OCI-LY7 (cell line): ENCODE measurements at regions of chr5 and their contacts with region 1.

Region 1: DNA sequence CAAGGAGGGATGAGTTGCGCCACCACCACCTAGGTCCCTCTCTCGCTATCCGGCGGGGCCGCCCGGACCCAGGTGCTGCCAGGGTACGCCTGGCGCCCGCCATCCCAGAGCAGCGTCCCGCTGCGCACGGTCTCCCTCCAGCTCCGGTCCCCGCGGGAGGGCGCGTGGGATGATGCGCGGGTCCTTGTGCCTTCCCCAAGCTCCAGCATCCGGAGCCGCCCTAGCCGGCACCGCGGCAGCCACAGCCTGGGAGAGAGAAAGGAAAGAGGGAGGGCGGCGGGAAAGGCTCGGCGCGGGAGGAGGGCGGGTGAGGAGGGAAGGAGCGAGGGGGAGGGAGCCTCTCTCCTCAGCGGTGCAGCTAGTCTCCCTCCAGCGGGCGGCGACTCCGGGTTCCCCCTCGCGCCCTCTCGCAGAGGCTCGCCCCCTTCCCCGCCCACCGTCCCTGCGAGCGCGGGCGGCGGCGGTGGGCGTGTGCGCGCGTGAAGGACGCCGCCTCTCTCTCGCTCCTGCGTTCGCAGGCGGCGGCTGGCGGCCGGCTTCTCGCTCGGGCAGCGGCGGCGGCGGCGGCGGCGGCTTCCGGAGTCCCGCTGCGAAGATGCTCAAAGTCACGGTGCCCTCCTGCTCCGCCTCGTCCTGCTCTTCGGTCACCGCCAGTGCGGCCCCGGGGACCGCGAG is at the start of gene CAMK4:
- DNase-seq: peak; percentile 82
- H3K4me3 ChIP-seq: peak within 1 kb of the TSS; percentile 75
- H3K27ac ChIP-seq: peak within 1 kb of the TSS; percentile 49
- H3K4me1 ChIP-seq: peaks cover 20% of the 10 kb centered on the region
- CTCF ChIP-seq: peak; percentile 43
- total RNA-seq, gene CAMK4: 36.5 and 40.2 TPM in 2 replicates

Region 2: DNA sequence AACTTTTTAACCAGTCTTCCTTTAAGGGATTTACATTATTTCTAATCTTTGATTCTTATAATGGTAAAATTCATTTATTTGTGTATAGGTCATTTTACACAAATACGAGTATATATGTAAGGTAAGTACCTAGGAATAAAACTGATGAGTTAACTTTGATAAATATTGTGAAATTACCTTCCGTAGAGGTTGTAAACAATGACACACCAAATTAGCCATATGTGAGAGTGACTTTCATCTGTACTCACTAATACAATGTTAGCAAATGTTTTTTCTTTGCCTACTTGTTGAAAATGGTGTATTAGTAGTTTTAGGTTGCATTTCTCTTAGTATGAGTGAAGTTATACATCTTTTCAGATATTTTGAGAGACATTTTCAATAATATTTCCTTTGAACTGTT is 195.2 kb before region 1 on chr5:
- CTCF ChIA-PET with region 1: no interaction called
- POLR2A ChIA-PET with region 1: no interaction called
- intact Hi-C with region 1: no loop called
- DNase-seq: no peak
- H3K4me3 ChIP-seq: no peak overlapping the region
- H3K27ac ChIP-seq: no peak overlapping the region
- H3K4me1 ChIP-seq: no peaks in the 10 kb centered on the region
- CTCF ChIP-seq: no peak

Region 3: GRCh38 chr5:111092062-111092853 is 131.8 kb before region 1 on chr5 and contains the start of gene WDR36:
- CTCF ChIA-PET with region 1: no interaction called
- POLR2A ChIA-PET with region 1: no interaction called
- intact Hi-C with region 1: loop called (anchors 5 kb)
- DNase-seq: peak; percentile 94
- H3K4me3 ChIP-seq: peak within 1 kb of the TSS; percentile 91
- H3K27ac ChIP-seq: peak within 1 kb of the TSS; percentile 48
- H3K4me1 ChIP-seq: peaks cover 27% of the 10 kb centered on the region
- CTCF ChIP-seq: no peak
- total RNA-seq, gene WDR36: 39.1 and 46.5 TPM in 2 replicates

Region 4: DNA sequence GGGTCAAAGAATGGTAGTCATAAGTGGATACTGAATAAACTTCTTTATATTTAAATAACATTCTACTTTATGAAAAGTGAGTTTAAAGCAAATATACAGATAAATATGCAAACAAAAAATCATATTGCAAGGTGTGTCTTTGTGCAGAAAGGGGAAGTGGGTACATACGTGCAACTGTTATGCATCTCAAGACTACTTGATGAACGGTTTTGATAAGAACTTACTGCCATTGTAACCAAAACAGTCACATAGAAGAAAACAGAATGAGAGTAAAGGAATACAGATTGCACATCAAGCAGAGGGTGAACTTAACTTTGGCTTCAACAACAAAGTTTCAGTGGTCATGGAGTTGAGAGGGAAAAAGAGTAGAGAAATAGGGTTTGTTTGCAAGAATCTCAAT is 10.1 kb after region 1 on chr5:
- CTCF ChIA-PET with region 1: interaction called, 3 read pairs
- POLR2A ChIA-PET with region 1: interaction called, 18 read pairs
- intact Hi-C with region 1: no loop called
- DNase-seq: peak; percentile 37
- H3K4me3 ChIP-seq: no peak overlapping the region
- H3K27ac ChIP-seq: no peak overlapping the region
- H3K4me1 ChIP-seq: peaks cover 59% of the 10 kb centered on the region
- CTCF ChIP-seq: no peak

Region 5: DNA sequence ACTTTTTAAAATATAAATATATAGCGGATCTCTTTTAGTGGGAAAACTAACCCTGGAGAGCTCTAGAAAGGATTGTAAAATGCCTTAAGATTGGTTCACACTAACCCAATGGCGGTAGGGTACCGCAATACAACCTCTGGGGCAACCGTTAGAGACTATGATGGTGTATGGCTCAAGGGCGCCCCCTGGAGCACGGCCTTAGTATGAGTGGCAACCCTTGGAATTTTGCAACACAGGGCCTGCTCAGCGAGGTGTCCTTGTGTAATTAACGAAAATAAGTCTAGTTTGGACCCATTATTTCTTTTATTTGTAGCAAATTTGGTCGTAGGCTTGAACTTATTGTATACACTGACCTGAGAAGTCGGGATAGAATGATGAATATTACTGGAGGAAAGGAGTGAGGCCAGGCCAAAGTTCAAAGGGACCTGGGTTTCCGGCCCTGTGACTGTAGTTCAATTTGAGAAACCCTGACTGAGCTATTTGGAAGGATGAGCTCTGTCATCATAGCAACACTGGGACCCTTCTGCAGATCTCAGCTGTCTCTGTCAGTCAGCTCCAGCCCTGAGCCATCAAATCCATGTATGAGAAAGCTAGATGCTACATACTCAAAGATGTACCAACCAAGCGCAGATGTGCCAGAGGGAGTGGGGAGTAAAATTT is 54.9 kb after region 1 on chr5:
- CTCF ChIA-PET with region 1: no interaction called
- POLR2A ChIA-PET with region 1: interaction called, 5 read pairs
- intact Hi-C with region 1: loop called (anchors 2 kb)
- DNase-seq: peak; percentile 59
- H3K4me3 ChIP-seq: no peak overlapping the region
- H3K27ac ChIP-seq: no peak overlapping the region
- H3K4me1 ChIP-seq: peaks cover 6% of the 10 kb centered on the region
- CTCF ChIP-seq: peak; percentile 93

Region 6: DNA sequence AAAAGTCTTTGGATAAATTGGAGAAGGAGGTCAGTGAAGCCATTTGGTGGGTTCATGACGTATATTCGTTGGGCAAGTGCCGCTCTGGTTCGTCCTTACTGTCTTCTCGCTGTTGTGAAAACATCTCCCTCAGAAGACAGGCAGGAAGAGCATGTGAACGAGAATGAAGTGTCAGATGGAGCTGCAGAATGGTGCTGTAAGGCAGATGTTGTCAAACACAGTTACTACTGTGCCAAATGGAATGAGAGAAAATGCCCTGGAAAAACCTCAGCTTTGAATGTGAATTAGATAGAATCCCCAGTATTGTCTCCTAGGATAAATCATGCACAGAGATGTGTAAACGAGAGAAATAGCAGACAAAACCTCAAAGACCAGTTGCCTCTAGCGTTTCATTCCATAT is 121.7 kb after region 1 on chr5:
- CTCF ChIA-PET with region 1: no interaction called
- POLR2A ChIA-PET with region 1: no interaction called
- intact Hi-C with region 1: no loop called
- DNase-seq: no peak
- H3K4me3 ChIP-seq: no peak overlapping the region
- H3K27ac ChIP-seq: no peak overlapping the region
- H3K4me1 ChIP-seq: no peaks in the 10 kb centered on the region
- CTCF ChIP-seq: no peak

Region 7: DNA sequence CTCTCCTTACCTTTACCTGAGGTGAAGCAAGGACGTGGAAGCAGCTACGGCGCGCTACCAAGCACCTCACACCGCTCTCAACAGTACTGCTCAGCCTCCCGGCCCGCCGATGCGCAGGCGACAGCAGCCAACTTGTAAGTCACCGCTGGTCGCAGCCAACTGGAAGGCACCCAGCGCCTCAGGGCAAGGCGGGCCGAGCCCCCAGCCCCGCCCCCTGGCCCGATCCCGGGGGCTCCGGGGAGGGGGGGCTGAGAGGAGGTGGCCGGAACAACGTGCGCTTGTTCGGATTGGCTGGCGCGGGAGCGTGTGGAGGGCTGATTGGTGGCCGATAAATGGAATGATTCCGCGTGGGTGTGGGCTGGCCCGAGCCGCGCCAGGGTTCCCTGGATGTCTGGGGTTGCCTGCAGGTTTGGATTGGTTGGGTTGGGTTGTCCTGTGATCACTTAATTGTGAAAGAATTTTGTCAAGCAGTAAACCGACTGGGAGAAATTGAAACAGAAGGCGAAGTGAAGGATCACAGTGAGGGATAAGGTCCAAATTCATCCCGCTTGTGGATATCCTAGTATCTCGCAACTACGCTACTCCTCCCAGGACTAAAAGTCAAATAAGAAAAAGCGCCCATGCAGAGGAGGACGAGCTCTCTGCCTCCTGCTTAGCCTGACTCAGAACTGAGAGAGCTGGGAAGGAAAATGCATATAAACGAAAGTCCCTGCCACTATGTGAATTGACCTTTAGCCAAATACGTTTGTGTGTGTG is 288.5 kb after region 1 on chr5 and contains the start of gene STARD4:
- CTCF ChIA-PET with region 1: interaction called, 3 read pairs
- POLR2A ChIA-PET with region 1: interaction called, 3 read pairs
- intact Hi-C with region 1: loop called (anchors 2 kb)
- DNase-seq: peak; percentile 96
- H3K4me3 ChIP-seq: peak within 1 kb of the TSS; percentile 91
- H3K27ac ChIP-seq: peak within 1 kb of the TSS; percentile 69
- H3K4me1 ChIP-seq: peaks cover 38% of the 10 kb centered on the region
- CTCF ChIP-seq: no peak
- total RNA-seq, gene STARD4: 28.1 and 30.4 TPM in 2 replicates

Region 8: DNA sequence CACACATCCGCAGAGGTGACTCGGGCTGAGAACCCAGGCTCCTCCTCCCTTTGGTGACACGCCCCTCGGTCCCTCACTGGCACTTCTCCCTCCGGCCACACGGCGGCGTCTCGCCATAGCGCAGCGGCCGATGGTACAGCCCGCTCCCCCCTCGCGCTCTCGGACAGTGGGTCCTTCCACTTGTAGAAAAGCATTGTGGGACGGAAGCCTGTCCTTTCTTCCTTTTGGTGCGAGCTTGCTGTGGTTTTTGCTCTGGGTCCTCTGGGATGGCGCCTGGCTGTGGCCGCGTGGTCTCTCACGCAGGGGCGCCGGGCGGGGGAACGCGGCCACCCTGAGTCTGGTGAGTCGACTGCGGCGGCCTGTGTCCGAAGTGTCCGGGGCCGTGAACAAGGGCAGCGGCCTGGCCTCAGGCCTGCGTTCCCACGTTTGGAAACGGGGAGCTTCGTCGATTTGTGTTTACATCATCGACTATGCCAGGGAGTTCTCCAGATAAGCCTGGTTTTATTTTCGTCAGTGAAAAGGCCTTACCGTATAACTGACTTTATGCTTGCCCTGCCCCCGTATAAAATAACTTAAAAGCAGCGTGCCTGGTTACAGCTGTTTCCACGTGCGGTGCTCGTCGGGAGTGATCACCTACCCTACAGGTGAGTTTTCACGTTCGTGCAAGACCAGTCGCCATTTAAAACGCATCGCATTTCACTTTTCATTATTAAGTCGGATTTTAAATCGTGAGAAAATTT is 936.8 kb after region 1 on chr5:
- CTCF ChIA-PET with region 1: no interaction called
- POLR2A ChIA-PET with region 1: no interaction called
- intact Hi-C with region 1: loop called (anchors 5 kb)
- DNase-seq: peak; percentile 92
- H3K4me3 ChIP-seq: peak overlapping the region; percentile 99
- H3K27ac ChIP-seq: peak overlapping the region; percentile 56
- H3K4me1 ChIP-seq: peaks cover 21% of the 10 kb centered on the region
- CTCF ChIP-seq: peak; percentile 92